Transverse colon (tissue), 4 donors: ENCODE measurements at regions of chr13 and their contacts with region 1.

Region 1: GRCh38 chr13:49996951-49997895 is at the start of gene TRIM13:
- DNase-seq: peak; percentile 92
- H3K4me3 ChIP-seq: peak within 1 kb of the TSS; percentile 81 to 99 (median 88)
- H3K27ac ChIP-seq: peak within 1 kb of the TSS; percentile 96 to 100 (median 98)
- H3K4me1 ChIP-seq: peaks cover 31 to 52% (median 49%) of the 10 kb centered on the region in 4 donors
- H3K27me3 ChIP-seq: no peaks in the 10 kb centered on the region
- CTCF ChIP-seq: peak; percentile 69 to 86 (median 73)
- EP300 ChIP-seq: no peak
- POLR2A ChIP-seq: no peak
- total RNA-seq, gene TRIM13: 5.6 to 30.6 (median 15.0) TPM

Region 2: DNA sequence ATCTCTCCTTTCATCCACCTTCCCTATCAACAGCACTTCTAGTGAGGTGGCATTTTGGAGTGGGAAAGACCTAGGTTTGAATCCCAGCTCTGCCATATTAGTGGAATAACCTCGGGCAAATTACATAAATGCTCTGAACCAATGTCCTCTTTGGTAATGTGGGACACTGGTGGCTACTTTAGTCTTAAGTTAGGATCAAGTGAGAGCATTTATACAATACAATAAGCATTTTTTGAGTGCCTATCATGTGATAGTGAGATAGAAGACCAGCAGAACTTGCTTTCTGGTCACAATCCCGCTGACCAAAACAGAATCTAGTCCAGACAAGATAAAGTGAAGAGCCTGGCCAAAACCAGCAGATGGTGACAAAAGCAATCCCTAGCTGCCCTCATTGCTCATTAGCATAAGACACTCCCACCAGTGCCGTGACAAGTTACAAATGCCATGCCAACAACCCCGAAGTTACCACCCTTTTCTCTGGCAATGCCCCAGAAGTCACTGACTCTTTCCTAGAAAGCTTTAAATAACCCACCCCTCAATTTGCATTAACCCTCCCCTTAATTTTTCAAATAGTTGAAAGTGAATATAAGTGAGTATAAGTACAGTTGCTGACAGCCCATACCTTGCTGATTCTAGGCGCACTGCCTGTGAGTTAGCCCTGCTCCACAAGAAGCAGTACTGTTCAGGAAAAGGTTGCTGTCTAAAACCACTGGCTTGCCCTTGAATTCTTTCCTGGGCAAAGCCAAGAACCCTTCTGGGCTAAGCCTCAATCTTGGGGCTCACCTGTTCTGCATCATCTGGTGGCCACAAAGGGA is 175.8 kb before region 1 on chr13:
- in situ Hi-C with region 1: no loop called
- intact Hi-C with region 1: no loop called
- DNase-seq: no peak
- H3K4me3 ChIP-seq: no peak overlapping the region
- H3K27ac ChIP-seq: no peak overlapping the region
- H3K4me1 ChIP-seq: no peaks in the 10 kb centered on the region
- H3K27me3 ChIP-seq: no peaks in the 10 kb centered on the region
- CTCF ChIP-seq: no peak
- EP300 ChIP-seq: no peak
- POLR2A ChIP-seq: no peak

Region 3: DNA sequence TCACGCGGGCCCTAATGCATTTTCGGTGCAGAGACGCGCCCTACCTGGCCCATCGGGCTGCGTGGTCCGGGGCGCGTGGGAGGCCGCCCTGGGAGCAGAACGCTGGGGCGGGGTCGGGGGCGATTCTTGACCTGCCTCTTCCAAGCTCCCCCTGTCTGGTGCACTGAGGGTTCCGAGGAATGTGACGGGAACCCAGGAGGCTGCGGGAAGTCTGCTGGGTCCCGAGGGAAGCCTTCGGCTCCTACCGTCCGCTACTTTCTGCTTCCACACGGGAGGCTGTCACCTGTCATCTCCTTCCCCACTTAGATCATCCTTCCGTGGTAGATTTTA is 60.3 kb before region 1 on chr13:
- in situ Hi-C with region 1: no loop called
- intact Hi-C with region 1: loop called (anchors 1 kb)
- DNase-seq: no peak
- H3K4me3 ChIP-seq: peak overlapping the region; percentile 48 to 97 (median 85)
- H3K27ac ChIP-seq: peak overlapping the region; percentile 90 to 94 (median 92)
- H3K4me1 ChIP-seq: peaks cover 0 to 47% (median 16%) of the 10 kb centered on the region in 4 donors
- H3K27me3 ChIP-seq: no peaks in the 10 kb centered on the region
- CTCF ChIP-seq: no peak
- EP300 ChIP-seq: no peak
- POLR2A ChIP-seq: no peak

Region 4: DNA sequence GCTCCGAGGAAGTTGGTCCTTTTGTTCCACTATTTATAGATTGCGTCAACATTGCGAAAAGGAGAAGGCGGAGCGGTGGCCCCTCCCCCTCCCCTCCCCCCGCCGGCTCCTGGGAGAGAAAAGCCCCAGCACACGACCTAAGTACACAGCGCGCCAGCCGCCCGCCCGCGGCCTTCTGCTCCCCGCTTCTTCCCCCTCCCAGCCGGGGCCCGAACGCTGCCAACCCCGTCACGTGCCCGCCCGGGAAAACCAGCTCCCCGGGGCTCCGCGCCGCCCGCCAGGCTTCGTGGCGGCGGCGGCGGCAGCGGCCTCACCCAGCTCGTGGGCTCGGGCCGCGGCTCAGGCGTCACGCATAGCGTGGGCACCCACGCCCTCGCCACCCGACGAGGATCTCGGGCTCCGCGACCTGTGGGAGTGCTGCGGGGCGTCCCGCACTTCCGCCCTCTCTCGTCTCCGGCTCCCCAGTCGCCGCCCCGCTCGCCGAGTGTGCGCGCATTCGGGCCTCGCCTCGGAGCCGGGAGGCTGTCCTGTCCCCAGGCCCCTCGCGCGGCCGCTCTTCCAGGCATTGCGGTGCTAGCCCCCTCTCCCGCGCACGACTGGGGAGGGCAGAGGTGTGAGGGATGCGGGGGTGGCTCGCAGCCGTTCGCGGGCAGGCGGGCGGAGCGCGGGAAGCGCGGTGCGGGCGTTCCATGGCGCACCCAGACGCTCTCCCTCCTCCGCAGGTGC is 128.5 kb after region 1 on chr13:
- in situ Hi-C with region 1: loop called in 1 of 4 experiments (anchors 10 kb)
- intact Hi-C with region 1: loop called (anchors 1 kb)
- DNase-seq: peak; percentile 96
- H3K4me3 ChIP-seq: peak overlapping the region; percentile 64 to 88 (median 78)
- H3K27ac ChIP-seq: peak overlapping the region; percentile 95 to 100 (median 98)
- H3K4me1 ChIP-seq: peaks cover 26 to 53% (median 42%) of the 10 kb centered on the region in 4 donors
- H3K27me3 ChIP-seq: peaks cover 31% of the 10 kb centered on the region
- CTCF ChIP-seq: no peak
- EP300 ChIP-seq: no peak
- POLR2A ChIP-seq: peak; percentile 90

Region 5: DNA sequence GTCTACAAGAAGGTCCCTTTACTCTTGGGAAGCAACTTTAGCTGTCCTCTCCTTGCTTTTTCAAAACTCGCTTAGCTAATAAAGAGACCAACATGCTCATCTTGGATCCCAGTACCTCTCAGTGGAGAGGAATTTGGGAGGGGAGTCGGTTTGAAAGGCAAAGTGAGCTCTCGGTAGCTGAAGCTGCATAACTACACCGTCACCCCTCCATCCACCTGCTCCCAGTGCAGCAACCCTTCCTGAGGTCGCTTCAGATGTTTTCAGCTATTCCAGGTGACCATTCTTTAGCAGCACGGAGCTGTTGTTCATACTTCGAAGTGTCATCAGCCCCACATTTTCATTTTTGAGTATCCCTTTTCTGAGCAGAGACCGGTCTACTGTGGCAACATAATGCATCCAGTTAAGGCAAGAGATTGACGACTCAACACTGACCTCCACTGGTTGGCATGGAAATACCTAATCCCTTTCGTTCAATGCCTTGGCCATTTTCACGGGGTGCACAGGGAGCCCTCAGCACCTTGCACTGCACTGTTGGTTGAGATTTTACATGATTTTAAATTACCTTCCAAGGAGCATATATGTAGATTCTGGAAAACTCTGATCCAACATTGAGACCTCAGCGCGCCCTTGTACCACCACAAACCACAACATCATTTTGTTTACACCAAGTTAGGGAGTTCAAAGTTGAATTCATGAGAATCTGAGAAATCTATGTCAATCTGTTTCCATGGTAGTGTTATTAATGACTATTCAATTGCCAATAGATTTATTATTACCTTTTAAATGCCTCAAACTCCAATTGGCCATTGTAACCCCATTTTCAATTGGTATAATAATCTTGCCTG is 804.1 kb after region 1 on chr13:
- in situ Hi-C with region 1: loop called in 1 of 4 experiments (anchors 25 kb)
- intact Hi-C with region 1: no loop called
- DNase-seq: peak; percentile 65
- H3K4me3 ChIP-seq: no peak overlapping the region
- H3K27ac ChIP-seq: peak overlapping the region in 1 of 4 donors; percentile 2
- H3K4me1 ChIP-seq: peaks cover 0 to 12% (median 1%) of the 10 kb centered on the region in 4 donors
- H3K27me3 ChIP-seq: no peaks in the 10 kb centered on the region
- CTCF ChIP-seq: peak; percentile 61 to 68 (median 68)
- EP300 ChIP-seq: no peak
- POLR2A ChIP-seq: no peak

Region 6: DNA sequence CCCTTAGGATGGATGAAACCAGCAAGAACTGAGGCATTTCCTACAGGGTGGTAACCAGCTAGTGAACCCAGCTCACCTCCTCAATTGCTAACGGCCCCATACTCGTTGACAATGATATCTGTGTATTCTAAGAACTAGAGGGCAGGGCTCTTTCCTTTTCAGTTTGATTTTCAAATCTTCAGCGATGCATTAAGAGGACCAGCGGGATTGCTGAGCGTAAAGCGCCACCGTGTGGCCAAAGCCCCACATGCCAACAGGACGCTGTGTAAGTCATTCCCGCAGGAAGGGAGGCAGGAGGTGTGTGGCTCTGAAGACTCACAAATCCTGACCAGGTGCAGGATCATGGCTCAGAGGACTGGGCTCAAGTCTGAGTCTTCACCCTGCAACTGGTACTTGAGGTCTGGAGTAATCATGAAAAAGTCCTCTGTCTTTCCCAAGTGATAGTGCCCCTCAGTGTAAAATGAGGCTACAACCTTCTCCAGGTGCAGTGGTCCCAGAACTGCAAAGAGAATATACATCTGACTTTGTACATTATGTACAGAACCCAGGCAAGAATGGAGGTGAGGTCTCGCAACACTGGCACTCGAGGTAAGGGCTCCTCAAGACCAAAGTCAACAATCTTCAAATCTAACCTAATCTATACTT is 1072.9 kb after region 1 on chr13:
- in situ Hi-C with region 1: loop called in 2 of 4 experiments (anchors 25 kb)
- intact Hi-C with region 1: no loop called
- DNase-seq: peak; percentile 84
- H3K4me3 ChIP-seq: no peak overlapping the region
- H3K27ac ChIP-seq: no peak overlapping the region
- H3K4me1 ChIP-seq: peaks cover 0 to 4% (median 2%) of the 10 kb centered on the region in 4 donors
- H3K27me3 ChIP-seq: no peaks in the 10 kb centered on the region
- CTCF ChIP-seq: peak; percentile 84 to 97 (median 92)
- EP300 ChIP-seq: no peak
- POLR2A ChIP-seq: no peak